ENCODE measurements at regions of chr1 and their contacts with region 1.

Region 1: DNA sequence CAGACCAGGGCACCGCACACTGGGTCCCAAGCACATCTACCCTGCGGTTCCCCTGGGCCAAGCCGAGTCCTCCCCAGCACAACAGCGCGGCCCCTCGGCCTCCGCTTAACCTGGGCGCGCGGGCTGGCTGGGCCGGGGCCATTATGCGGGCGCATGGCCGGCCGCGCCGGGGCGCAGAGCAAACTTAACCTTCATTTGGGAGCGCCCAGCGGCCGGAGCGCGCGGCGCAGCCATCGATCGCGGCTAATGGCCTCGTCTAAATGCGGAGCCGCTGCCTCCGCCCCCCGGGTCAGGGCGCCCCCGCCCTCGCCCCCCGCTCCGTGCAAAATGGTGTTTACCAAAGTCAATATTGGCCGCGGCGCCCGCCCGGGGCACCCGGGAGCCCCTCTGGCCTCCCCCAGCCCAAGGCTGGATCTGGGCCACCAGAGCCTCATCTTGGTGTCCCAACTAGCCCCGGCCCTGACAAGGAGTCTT is 272.1 kb downstream of the TRABD2B start:
- DNase-seq: no peak
- H3K4me3 ChIP-seq: peak overlapping the region in 1 of 4 donors; percentile 33
- H3K27ac ChIP-seq: no peak overlapping the region
- H3K4me1 ChIP-seq: peaks cover 10 to 30% (median 26%) of the 10 kb centered on the region in 3 donors
- H3K27me3 ChIP-seq: peaks cover 6 to 80% (median 7%) of the 10 kb centered on the region in 4 donors
- CTCF ChIP-seq: peak in 1 of 6 experiments; percentile 10
- POLR2A ChIP-seq: no peak

Region 2: GRCh38 chr1:47437447-47438164 is 287.4 kb before region 1 on chr1 and contains the start of gene FOXD2:
- intact Hi-C with region 1: loop called (anchors 5 kb)
- DNase-seq: no peak
- H3K4me3 ChIP-seq: peak within 1 kb of the TSS; percentile 34 to 78 (median 58)
- H3K27ac ChIP-seq: peak within 1 kb of the TSS; percentile 72 to 88 (median 81)
- H3K4me1 ChIP-seq: peaks cover 27 to 62% (median 36%) of the 10 kb centered on the region in 3 donors
- H3K27me3 ChIP-seq: peaks cover 10 to 100% (median 34%) of the 10 kb centered on the region in 4 donors
- CTCF ChIP-seq: peak; percentile 93 to 98 (median 96)
- POLR2A ChIP-seq: peak in 2 of 4 donors; percentile 16 to 61
- total RNA-seq, gene FOXD2: under 0.01 TPM in 1 of 4 donors, not detected in the others

Measured in esophagus squamous epithelium (tissue), 5 donors.